ENCODE measurements at regions of chr1 and their contacts with region 1.

Region 1: DNA sequence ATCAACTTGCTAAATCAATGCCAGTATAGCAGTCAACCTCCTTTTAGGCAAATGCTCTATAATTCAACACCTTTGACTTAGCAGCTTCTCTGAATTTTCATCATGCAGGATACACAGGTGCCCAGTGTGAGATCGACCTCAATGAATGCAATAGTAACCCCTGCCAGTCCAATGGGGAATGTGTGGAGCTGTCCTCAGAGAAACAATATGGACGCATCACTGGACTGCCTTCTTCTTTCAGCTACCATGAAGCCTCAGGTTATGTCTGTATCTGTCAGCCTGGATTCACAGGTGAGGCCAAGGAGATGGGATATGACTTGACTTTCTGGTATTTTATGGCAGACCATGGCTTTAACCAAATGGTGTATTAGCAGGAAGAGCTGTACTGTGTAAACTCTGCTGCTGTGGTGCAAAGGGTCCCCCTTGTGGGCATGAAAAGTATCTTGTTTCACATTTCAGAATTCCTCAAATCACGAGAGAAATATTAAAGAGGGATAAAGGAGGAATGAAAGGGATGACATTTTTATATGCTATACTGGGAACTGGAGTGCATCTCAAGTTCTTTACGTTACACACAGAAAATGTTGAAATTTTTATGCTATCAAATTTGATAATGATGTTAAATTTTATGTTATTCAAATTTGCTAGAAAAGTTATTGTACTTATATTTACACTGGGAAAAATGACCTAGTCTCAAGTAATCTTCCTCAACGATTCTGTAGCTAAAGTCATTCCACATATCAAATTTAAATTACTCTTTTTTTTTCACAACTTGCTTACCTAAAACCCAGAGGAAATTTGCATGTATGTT is 88.9 kb downstream of the CRB1 start:
- DNase-seq: peak; percentile 25
- H3K4me3 Mint-ChIP-seq: no peak overlapping the region
- H3K27ac Mint-ChIP-seq: no peak overlapping the region
- H3K4me1 Mint-ChIP-seq: no peaks in the 10 kb centered on the region
- H3K27me3 Mint-ChIP-seq: no peaks in the 10 kb centered on the region

Region 2: DNA sequence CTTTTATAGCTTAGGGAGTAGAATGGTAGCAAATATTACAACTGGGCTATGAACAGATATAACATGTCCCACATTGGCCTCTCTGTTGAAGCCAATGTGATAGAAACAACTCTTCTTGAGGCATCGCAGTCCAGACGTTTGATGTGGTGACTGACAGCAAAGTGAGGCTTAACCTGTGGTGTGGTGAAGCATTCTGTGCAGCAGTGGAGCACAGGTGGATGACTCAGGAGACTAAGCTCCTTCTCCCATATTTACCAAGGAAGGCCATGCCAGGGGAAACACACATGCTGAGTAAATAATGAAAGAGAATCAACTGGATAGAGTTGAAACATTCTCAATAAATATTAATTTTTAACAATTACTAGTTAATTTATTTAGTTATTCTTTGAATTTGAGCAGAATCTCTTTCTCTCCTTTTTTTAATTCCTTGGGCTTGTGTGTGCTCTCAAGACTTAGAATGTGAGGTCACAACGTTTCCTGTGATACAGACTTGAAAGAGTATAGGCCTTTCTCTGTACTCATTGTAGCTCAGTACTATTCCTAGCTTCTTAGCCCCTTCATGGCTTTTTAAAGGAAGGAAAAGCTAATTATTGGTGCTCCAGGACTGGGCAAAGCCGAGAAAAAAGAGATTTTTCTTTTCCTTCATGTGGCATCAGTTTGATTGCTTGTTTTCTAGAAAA is 71.3 kb before region 1 on chr1:
- CTCF ChIA-PET with region 1: no interaction called
- POLR2A ChIA-PET with region 1: no interaction called
- intact Hi-C with region 1: no loop called
- DNase-seq: peak; percentile 8
- H3K4me3 Mint-ChIP-seq: no peak overlapping the region
- H3K27ac Mint-ChIP-seq: no peak overlapping the region
- H3K4me1 Mint-ChIP-seq: no peaks in the 10 kb centered on the region
- H3K27me3 Mint-ChIP-seq: peaks cover 3% of the 10 kb centered on the region

Region 3: DNA sequence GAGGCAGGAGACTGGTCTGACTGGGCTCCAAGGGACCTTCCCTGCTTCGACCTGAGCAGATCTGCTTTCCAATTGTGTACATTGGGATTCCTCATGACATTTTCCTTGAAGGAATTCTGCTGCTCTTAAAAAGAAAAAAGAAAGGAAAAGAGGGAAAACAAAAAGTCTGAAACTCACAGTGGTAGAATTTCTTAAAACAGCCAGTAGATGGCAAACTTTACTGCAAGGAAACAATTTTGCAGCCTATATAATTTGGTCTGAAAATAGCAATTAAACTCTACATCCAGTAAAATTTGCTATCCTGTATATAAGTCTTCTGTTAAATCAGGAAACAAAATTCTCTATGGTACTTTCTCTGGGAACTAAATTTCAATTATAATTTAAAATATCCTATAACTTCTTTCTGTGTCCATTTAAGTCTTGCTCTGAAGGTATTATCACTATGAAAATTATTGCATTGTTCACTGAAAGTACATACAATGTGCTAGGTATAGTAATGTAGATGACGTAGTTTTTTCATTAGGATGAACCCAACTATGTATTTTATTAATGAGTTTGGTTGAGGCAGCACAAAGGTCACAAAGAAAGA is 29.1 kb before region 1 on chr1:
- CTCF ChIA-PET with region 1: interaction called, 4 read pairs
- POLR2A ChIA-PET with region 1: no interaction called
- intact Hi-C with region 1: loop called (anchors 2 kb)
- DNase-seq: no peak
- H3K4me3 Mint-ChIP-seq: no peak overlapping the region
- H3K27ac Mint-ChIP-seq: no peak overlapping the region
- H3K4me1 Mint-ChIP-seq: no peaks in the 10 kb centered on the region
- H3K27me3 Mint-ChIP-seq: no peaks in the 10 kb centered on the region